GM12878 (cell line): ENCODE measurements at regions of chr16 and their contacts with region 1.

Region 1: GRCh38 chr16:11843861-11844260 is 7.5 kb downstream of the RSL1D1 start:
- DNase-seq: no peak
- ATAC-seq: no peak
- H3K4me3 ChIP-seq: no peak overlapping the region
- H3K27ac ChIP-seq: no peak overlapping the region
- H3K4me1 ChIP-seq: no peaks in the 10 kb centered on the region; the same call in 1 of the 2 replicates
- H3K27me3 ChIP-seq: no peaks in the 10 kb centered on the region
- CTCF ChIP-seq: no peak
- EP300 ChIP-seq: no peak
- POLR2A ChIP-seq: no peak
- RAD21 ChIP-seq: no peak

Region 2: GRCh38 chr16:11806721-11807120 is 37.1 kb before region 1 on chr16:
- CTCF ChIA-PET with region 1: no interaction called
- POLR2A ChIA-PET with region 1: no interaction called
- RAD21 ChIA-PET with region 1: no interaction called
- SMC1A ChIA-PET with region 1: no interaction called
- in situ Hi-C with region 1: no loop called
- intact Hi-C with region 1: no loop called
- DNase-seq: no peak
- ATAC-seq: no peak
- H3K4me3 ChIP-seq: no peak overlapping the region
- H3K27ac ChIP-seq: no peak overlapping the region
- H3K4me1 ChIP-seq: peaks cover 8% of the 10 kb centered on the region
- H3K27me3 ChIP-seq: no peaks in the 10 kb centered on the region
- CTCF ChIP-seq: no peak
- EP300 ChIP-seq: no peak
- POLR2A ChIP-seq: no peak
- RAD21 ChIP-seq: no peak

Region 3: DNA sequence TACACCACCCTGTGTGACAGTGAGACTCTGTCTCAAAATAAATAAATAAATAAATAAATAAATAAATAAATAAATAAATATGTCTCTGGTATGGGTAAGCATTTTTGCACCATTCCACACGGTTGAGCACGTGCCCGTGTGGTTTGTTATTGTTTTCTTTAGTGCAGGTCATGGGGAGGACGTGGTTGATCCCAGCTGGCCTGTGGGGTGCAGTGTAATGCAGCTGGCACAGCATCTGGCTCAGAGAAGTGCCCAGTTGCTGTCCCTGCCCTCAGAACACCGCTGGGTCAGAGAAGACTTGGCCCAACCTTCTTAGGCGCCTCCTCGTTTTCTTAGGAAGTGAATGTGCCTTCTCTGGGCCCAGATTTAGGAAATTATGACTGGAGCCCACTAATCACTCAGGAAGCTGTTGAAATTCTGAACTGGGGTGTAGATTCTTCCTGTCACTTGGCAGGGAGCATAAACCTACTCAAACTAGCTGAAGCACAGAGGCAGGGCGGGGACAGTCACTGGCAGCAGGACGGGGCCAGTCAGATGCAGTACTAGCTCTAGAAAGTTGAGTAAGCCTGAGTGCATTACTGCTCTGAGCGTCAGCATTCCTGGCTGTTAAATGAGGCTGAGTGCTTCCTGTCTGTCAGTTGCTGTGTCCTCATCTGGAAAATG is 218.6 kb after region 1 on chr16:
- CTCF ChIA-PET with region 1: interaction called, 9 read pairs
- POLR2A ChIA-PET with region 1: interaction called, 10 read pairs
- RAD21 ChIA-PET with region 1: interaction called, 4 read pairs
- SMC1A ChIA-PET with region 1: no interaction called
- in situ Hi-C with region 1: no loop called
- intact Hi-C with region 1: no loop called
- DNase-seq: no peak
- ATAC-seq: no peak
- H3K4me3 ChIP-seq: no peak overlapping the region
- H3K27ac ChIP-seq: no peak overlapping the region
- H3K4me1 ChIP-seq: peaks cover 11% of the 10 kb centered on the region
- H3K27me3 ChIP-seq: no peaks in the 10 kb centered on the region
- CTCF ChIP-seq: no peak
- EP300 ChIP-seq: no peak
- POLR2A ChIP-seq: no peak
- RAD21 ChIP-seq: no peak